H1 (cell line): ENCODE measurements at regions of chr20 and their contacts with region 1.

Region 1: GRCh38 chr20:3051385-3052019 is 5.7 kb downstream of the MRPS26 start:
- DNase-seq: no peak
- H3K4me3 ChIP-seq: no peak overlapping the region
- H3K27ac ChIP-seq: no peak overlapping the region
- H3K4me1 ChIP-seq: peaks cover 0 to 4% (median 1%) of the 10 kb centered on the region in 4 experiments; a peak in 2 of 7 replicates
- H3K27me3 ChIP-seq: no peaks in the 10 kb centered on the region
- CTCF ChIP-seq: no peak
- EP300 ChIP-seq: no peak
- POLR2A ChIP-seq: no peak
- RAD21 ChIP-seq: no peak

Region 2: GRCh38 chr20:3021327-3021726 is 30.2 kb before region 1 on chr20:
- CTCF ChIA-PET with region 1: no interaction called
- POLR2A ChIA-PET with region 1: no interaction called
- DNase-seq: no peak
- H3K4me3 ChIP-seq: no peak overlapping the region
- H3K27ac ChIP-seq: no peak overlapping the region
- H3K4me1 ChIP-seq: no peaks in the 10 kb centered on the region
- H3K27me3 ChIP-seq: no peaks in the 10 kb centered on the region
- CTCF ChIP-seq: no peak
- EP300 ChIP-seq: no peak
- POLR2A ChIP-seq: no peak
- RAD21 ChIP-seq: no peak

Region 3: GRCh38 chr20:3068986-3069900 is 17.7 kb after region 1 on chr20:
- CTCF ChIA-PET with region 1: interaction called, 23 read pairs
- POLR2A ChIA-PET with region 1: interaction called, 5 read pairs
- DNase-seq: no peak
- H3K4me3 ChIP-seq: no peak overlapping the region
- H3K27ac ChIP-seq: no peak overlapping the region
- H3K4me1 ChIP-seq: peaks cover 0 to 8% (median 3%) of the 10 kb centered on the region in 4 experiments; a peak in 5 of 7 replicates
- H3K27me3 ChIP-seq: peaks cover 11 to 30% (median 26%) of the 10 kb centered on the region in 4 experiments
- CTCF ChIP-seq: peak; percentile 42 to 48 (median 46)
- EP300 ChIP-seq: no peak
- POLR2A ChIP-seq: no peak
- RAD21 ChIP-seq: peak in 1 of 2 experiments; percentile 25; a peak in 2 of 4 replicates

Region 4: GRCh38 chr20:3074812-3075211 is 23.3 kb after region 1 on chr20:
- CTCF ChIA-PET with region 1: interaction called, 23 read pairs
- POLR2A ChIA-PET with region 1: interaction called, 5 read pairs
- DNase-seq: no peak
- H3K4me3 ChIP-seq: no peak overlapping the region
- H3K27ac ChIP-seq: no peak overlapping the region
- H3K4me1 ChIP-seq: peaks cover 0 to 8% (median 3%) of the 10 kb centered on the region in 4 experiments; a peak in 5 of 7 replicates
- H3K27me3 ChIP-seq: peaks cover 11 to 30% (median 27%) of the 10 kb centered on the region in 4 experiments
- CTCF ChIP-seq: no peak
- EP300 ChIP-seq: no peak
- POLR2A ChIP-seq: no peak
- RAD21 ChIP-seq: no peak

Region 5: GRCh38 chr20:3080939-3081388 is 29.5 kb after region 1 on chr20:
- CTCF ChIA-PET with region 1: interaction called, 14 read pairs
- POLR2A ChIA-PET with region 1: interaction called, 5 read pairs
- DNase-seq: no peak
- H3K4me3 ChIP-seq: no peak overlapping the region
- H3K27ac ChIP-seq: no peak overlapping the region
- H3K4me1 ChIP-seq: peaks cover 0 to 8% (median 6%) of the 10 kb centered on the region in 4 experiments; a peak in 5 of 7 replicates
- H3K27me3 ChIP-seq: peaks cover 27 to 43% (median 37%) of the 10 kb centered on the region in 4 experiments
- CTCF ChIP-seq: no peak
- EP300 ChIP-seq: no peak
- POLR2A ChIP-seq: no peak
- RAD21 ChIP-seq: no peak

Region 6: DNA sequence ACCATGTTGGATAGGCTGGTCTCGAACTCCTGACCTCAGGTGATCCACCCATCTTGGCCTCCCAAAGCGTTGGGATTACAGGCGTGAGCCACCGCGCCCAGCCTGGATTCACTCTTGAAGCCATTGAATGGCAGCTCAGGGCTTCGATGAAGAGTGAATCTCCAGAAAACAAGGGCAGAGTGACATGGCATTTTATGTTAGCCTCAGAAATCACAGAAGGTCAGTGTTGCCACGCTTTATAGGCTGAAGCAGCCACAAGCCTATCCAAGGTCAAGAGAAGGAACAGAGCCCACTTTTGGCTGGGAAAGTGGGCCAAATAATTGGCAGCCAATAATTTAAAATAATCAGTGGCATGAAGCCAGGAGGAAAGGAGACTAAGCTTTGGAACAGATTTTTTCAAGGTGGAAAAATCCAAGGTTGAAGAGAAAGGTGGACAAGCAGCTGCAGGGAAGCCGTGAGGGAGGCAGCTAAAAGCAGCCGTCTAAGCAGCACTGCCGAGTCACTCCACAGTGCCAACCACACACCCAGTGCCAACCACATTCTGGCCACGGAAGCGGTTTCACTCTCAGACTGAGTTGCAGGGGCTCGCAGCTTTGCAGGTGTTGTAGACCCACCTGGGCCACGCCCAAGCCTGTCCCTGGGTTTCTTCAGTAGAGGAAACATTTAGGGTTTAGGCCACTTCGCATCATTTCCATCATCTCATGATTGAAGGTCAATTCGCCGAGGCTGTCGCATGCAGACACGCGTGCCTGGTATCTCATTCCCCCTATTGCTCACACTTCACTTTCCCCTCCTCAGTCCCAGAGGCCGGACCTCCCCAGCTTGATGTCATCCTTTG is 50.5 kb after region 1 on chr20:
- CTCF ChIA-PET with region 1: interaction called, 16 read pairs
- POLR2A ChIA-PET with region 1: no interaction called
- DNase-seq: no peak
- H3K4me3 ChIP-seq: no peak overlapping the region
- H3K27ac ChIP-seq: no peak overlapping the region
- H3K4me1 ChIP-seq: peaks cover 0 to 5% (median under 1%) of the 10 kb centered on the region in 4 experiments; a peak in 3 of 7 replicates
- H3K27me3 ChIP-seq: no peaks in the 10 kb centered on the region
- CTCF ChIP-seq: no peak
- EP300 ChIP-seq: no peak
- POLR2A ChIP-seq: no peak
- RAD21 ChIP-seq: no peak